CD14-positive monocyte (primary cell): ENCODE measurements at regions of chr1 and their contacts with region 1.

Region 1: GRCh38 chr1:200262326-200262965 is 147.4 kb downstream of the ZNF281 start:
- DNase-seq: no peak
- H3K4me3 ChIP-seq: no peak overlapping the region
- H3K4me3 Mint-ChIP-seq: no peak overlapping the region
- H3K27ac ChIP-seq: no peak overlapping the region
- H3K27ac Mint-ChIP-seq: no peak overlapping the region
- H3K4me1 ChIP-seq: peaks cover 0 to 7% of the 10 kb centered on the region in 2 donors
- H3K4me1 Mint-ChIP-seq: peaks cover 8% of the 10 kb centered on the region
- H3K27me3 ChIP-seq: no peaks in the 10 kb centered on the region
- H3K27me3 Mint-ChIP-seq: peaks cover 0 to 1% (median 0%) of the 10 kb centered on the region in 3 donors
- CTCF ChIP-seq: no peak

Region 2: DNA sequence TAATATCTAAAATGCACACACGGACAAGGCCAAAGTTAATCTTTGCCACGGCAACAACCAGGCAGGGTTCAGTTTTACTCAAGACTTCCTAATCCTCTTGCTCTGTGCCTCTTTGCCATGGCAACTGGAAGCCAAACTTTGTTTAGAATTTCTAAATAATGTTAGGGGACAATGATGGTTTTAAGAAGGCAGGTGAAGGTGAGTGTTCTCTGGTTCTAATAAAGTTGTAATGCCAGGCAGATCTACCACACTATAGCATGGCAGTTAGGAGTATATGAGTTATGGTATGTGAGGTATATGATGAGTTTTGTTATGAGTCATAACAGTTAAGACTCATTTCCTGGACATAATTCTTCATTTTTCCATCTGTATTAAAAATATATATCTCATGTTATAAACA is 1620.9 kb before region 1 on chr1:
- intact Hi-C with region 1: no loop called
- DNase-seq: peak; percentile 51 to 68 (median 66)
- H3K4me3 ChIP-seq: peak overlapping the region; percentile 93 to 100 (median 96)
- H3K4me3 Mint-ChIP-seq: peak overlapping the region; percentile 82 to 92
- H3K27ac ChIP-seq: peak overlapping the region; percentile 36 to 90
- H3K27ac Mint-ChIP-seq: peak overlapping the region; percentile 47 to 97 (median 93)
- H3K4me1 ChIP-seq: peaks cover 37 to 63% of the 10 kb centered on the region in 2 donors
- H3K4me1 Mint-ChIP-seq: peaks cover 56% of the 10 kb centered on the region
- H3K27me3 ChIP-seq: no peaks in the 10 kb centered on the region
- H3K27me3 Mint-ChIP-seq: no peaks in the 10 kb centered on the region
- CTCF ChIP-seq: no peak

Region 3: GRCh38 chr1:200165500-200166220 is 96.8 kb before region 1 on chr1:
- intact Hi-C with region 1: loop called in 1 of 2 experiments (anchors 10 kb)
- DNase-seq: no peak
- H3K4me3 ChIP-seq: no peak overlapping the region
- H3K4me3 Mint-ChIP-seq: no peak overlapping the region
- H3K27ac ChIP-seq: no peak overlapping the region
- H3K27ac Mint-ChIP-seq: no peak overlapping the region
- H3K4me1 ChIP-seq: peaks cover 0 to 12% of the 10 kb centered on the region in 2 donors
- H3K4me1 Mint-ChIP-seq: peaks cover 21% of the 10 kb centered on the region
- H3K27me3 ChIP-seq: no peaks in the 10 kb centered on the region
- H3K27me3 Mint-ChIP-seq: peaks cover 0 to 1% (median 1%) of the 10 kb centered on the region in 3 donors
- CTCF ChIP-seq: no peak